Left ventricle myocardium inferior (tissue), 1 donor: ENCODE measurements at regions of chr10 and their contacts with region 1.

Region 1: GRCh38 chr10:31759799-31760626 is 168.6 kb downstream of the ARHGAP12 start:
- DNase-seq: peak; percentile 96
- H3K4me3 ChIP-seq: peak overlapping the region; percentile 98
- H3K27ac ChIP-seq: peak overlapping the region; percentile 99
- H3K4me1 ChIP-seq: peaks cover 47% of the 10 kb centered on the region
- H3K27me3 ChIP-seq: no peaks in the 10 kb centered on the region
- CTCF ChIP-seq: no peak

Region 2: GRCh38 chr10:31707093-31708039 is 52.6 kb before region 1 on chr10:
- intact Hi-C with region 1: loop called (anchors 10 kb)
- DNase-seq: peak; percentile 74
- H3K4me3 ChIP-seq: peak overlapping the region; percentile 41
- H3K27ac ChIP-seq: peak overlapping the region; percentile 92
- H3K4me1 ChIP-seq: peaks cover 53% of the 10 kb centered on the region
- H3K27me3 ChIP-seq: no peaks in the 10 kb centered on the region
- CTCF ChIP-seq: no peak

Region 3: DNA sequence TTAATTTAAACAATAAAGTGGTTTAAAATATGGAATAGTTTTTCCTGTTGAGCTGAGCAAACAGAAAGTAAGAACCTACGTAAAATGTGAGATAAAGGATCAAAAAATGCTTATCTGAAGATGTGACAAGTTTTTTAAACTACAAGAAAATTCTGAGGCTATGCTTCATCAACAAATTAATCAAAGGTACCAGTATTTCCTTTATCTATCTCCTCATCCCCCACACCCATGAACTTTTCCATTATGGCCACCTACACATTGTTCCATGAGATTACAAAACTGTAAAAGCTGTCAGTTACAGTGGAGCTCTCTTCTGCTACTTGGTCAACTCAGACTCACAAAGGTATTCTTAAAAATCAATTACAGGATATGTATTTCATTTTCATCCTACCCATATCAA is 91.2 kb after region 1 on chr10:
- intact Hi-C with region 1: no loop called
- DNase-seq: no peak
- H3K4me3 ChIP-seq: no peak overlapping the region
- H3K27ac ChIP-seq: no peak overlapping the region
- H3K4me1 ChIP-seq: peaks cover 7% of the 10 kb centered on the region
- H3K27me3 ChIP-seq: no peaks in the 10 kb centered on the region
- CTCF ChIP-seq: no peak

Region 4: DNA sequence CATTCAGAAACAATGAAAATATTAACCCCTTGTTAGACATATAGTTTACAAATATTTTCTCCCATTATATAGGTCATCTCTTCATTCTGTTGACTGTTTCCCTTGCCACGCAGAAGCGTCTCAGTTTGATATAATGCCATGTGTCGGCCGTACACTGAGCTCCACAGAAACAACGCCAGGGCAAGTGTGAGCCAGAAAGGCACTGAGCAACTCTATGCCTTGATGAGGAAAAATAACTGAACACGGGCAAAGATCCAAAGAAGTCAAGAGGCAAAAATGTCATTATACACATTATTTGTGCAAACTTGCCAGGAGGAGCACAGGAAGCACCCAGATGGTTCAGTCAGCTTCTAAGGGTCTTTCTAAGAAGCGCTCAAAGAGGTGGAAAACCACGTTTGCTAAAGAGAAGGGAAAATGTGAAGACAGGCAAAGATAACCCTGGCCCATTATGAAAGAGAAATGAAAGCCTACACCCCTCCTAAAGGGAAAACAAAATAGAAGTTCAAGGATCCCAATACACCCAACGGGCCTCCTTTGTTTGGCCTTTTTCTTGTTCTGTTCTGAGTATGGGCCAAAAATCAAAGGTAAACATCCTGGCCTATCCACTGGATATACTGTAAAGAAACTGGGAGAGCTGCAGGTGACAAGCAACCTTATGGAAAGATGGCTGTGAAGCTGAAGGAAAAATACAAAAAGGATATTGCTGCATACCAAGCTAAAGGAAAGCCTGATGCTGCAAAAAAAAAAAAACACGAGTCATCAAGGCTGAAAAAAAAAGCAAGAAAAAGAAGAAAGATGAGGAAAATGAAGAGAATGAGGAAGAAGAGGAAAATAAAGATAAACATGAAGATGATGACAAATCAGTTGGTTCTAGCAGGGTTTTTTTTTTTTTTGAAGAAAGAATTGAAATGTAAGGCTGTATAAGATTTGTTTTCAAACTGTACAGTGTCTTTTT is 153.2 kb after region 1 on chr10:
- intact Hi-C with region 1: no loop called
- DNase-seq: no peak
- H3K4me3 ChIP-seq: no peak overlapping the region
- H3K27ac ChIP-seq: no peak overlapping the region
- H3K4me1 ChIP-seq: peaks cover 34% of the 10 kb centered on the region
- H3K27me3 ChIP-seq: no peaks in the 10 kb centered on the region
- CTCF ChIP-seq: no peak